GM12878 (cell line): ENCODE measurements at regions of chr17 and their contacts with region 1.

Region 1: DNA sequence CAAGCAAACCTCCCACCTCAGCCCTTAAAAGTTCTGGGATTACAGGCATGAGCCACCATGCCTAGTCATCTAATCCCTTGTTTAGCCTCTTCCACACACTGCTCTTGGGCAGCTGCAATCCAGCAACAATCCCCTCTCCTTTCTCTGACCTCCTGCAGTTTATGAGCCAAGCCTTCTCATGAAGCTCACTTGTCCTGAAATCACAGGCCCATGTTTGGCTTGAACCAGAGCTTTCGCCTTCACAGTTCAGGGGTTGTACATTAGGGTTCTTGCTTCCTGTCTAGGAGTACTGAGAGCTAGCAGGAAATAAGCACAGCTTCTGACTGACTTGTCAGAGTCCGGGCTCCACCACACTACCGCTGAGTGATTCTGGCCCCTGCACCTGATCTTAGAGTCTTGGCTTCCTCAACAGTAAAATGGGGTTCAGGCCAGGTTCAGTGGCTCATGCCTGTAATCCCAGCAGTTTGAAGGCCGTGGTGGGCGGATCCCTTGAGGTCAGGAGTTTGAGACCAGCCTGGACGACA is 16.3 kb downstream of the ERAL1 start:
- DNase-seq: peak; percentile 79
- ATAC-seq: peak; percentile 99
- H3K4me3 ChIP-seq: no peak overlapping the region
- H3K27ac ChIP-seq: peak overlapping the region; percentile 61
- H3K4me1 ChIP-seq: peaks cover 15% of the 10 kb centered on the region
- H3K27me3 ChIP-seq: no peaks in the 10 kb centered on the region
- CTCF ChIP-seq: no peak
- EP300 ChIP-seq: no peak
- POLR2A ChIP-seq: peak; percentile 61
- RAD21 ChIP-seq: peak; percentile 25; the same call in 1 of the 2 replicates

Region 2: GRCh38 chr17:28889996-28890395 is 18.9 kb after region 1 on chr17:
- CTCF ChIA-PET with region 1: interaction called, 6 read pairs
- POLR2A ChIA-PET with region 1: interaction called, 9 read pairs
- RAD21 ChIA-PET with region 1: interaction called, 14 read pairs
- SMC1A ChIA-PET with region 1: interaction called, 19 read pairs
- in situ Hi-C with region 1: no loop called
- intact Hi-C with region 1: no loop called
- DNase-seq: no peak
- ATAC-seq: no peak
- H3K4me3 ChIP-seq: no peak overlapping the region
- H3K27ac ChIP-seq: no peak overlapping the region
- H3K4me1 ChIP-seq: peaks cover 59% of the 10 kb centered on the region
- H3K27me3 ChIP-seq: no peaks in the 10 kb centered on the region
- CTCF ChIP-seq: no peak
- EP300 ChIP-seq: no peak
- POLR2A ChIP-seq: no peak
- RAD21 ChIP-seq: no peak

Region 3: DNA sequence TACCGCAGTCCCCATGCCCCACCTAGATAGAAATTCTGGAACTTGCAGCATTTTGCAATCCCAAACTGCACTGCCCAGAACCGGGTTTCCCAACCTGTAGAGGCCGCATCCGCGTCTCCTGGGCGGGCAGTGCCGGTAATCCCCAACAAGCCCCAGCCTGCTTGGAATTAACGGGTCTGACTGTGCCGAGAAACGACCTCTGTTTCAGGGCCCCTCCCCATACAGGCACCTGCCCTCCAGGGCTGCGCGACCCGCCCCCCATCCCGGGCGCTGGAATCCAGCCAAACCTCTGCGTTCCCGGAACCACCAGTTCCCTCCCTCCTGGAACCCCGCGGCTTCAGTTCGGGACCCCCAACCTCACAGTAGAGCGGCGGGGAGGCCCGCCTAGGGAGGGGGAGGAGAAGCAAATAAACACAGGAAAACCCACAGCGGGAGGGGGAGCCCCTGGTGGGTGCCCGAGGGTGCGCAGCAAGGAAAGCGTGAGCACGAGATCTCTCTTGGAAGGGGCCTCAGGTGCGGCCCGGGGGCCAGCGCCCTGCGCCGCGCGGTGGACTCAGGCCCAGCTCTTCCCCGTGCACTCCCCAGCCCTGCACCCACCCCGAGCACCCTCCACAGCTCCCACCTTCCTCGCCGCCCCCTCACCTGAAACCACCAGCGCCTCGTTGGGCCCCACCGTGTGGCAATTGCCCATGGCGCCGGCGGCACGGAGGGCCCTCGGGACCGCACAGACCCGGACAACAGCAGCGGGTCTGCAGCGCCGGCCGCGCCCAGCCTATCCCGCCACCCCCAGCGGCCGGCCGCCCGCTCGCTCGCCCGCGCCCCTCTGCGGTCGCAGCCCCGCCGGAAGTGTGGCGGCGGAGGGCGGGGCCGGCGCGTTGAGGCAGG is 26.0 kb after region 1 on chr17 and contains the start of gene FLOT2:
- CTCF ChIA-PET with region 1: interaction called, 11 read pairs
- POLR2A ChIA-PET with region 1: interaction called, 9 read pairs
- RAD21 ChIA-PET with region 1: interaction called, 14 read pairs
- SMC1A ChIA-PET with region 1: interaction called, 19 read pairs
- in situ Hi-C with region 1: no loop called
- intact Hi-C with region 1: no loop called
- DNase-seq: no peak
- ATAC-seq: peak; percentile 43
- H3K4me3 ChIP-seq: peak within 1 kb of the TSS; percentile 92
- H3K27ac ChIP-seq: peak within 1 kb of the TSS; percentile 72
- H3K4me1 ChIP-seq: peaks cover 39% of the 10 kb centered on the region
- H3K27me3 ChIP-seq: no peaks in the 10 kb centered on the region
- CTCF ChIP-seq: peak in 2 of 3 experiments; percentile 11 to 17; a peak in 2 of 6 replicates
- EP300 ChIP-seq: no peak
- POLR2A ChIP-seq: peak; percentile 71
- RAD21 ChIP-seq: no peak
- polyA plus RNA-seq, gene FLOT2: 56.8 to 121 TPM